ENCODE measurements at regions of chr13 and their contacts with region 1.

Region 1: GRCh38 chr13:110907951-110908898 is 6.6 kb downstream of the ANKRD10 start:
- DNase-seq: no peak
- ATAC-seq: peak in 1 of 2 donors; percentile 31

Region 2: DNA sequence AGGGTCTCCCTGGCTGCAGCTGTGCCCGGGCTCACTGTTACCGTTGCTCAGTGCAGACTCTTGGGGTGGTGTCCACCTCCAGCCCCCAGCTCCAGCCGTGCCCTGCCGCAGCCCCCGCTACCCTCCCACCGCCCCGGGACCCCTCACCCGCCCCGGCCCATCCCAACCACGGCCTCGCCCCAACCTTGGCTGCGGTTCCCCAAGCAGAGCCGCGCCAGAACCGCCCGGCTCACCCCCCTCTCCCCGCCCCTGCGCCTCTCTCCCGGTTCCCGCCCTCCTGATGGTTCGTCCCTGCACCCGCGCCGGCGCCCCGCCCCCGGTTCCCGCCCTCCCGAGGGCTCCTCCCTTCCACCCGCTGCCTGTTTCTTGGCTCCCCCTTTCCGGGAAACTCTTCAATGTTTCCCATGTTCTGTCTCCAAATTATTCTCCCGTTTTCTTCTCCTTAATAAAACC is 33.7 kb before region 1 on chr13:
- intact Hi-C with region 1: loop called in 1 of 2 experiments (anchors 5 kb)
- DNase-seq: peak; percentile 90
- ATAC-seq: peak; percentile 81 to 89

Region 3: GRCh38 chr13:111165241-111166010 is 257.2 kb after region 1 on chr13:
- intact Hi-C with region 1: no loop called
- DNase-seq: no peak
- ATAC-seq: peak in 1 of 2 donors; percentile 55

Region 4: DNA sequence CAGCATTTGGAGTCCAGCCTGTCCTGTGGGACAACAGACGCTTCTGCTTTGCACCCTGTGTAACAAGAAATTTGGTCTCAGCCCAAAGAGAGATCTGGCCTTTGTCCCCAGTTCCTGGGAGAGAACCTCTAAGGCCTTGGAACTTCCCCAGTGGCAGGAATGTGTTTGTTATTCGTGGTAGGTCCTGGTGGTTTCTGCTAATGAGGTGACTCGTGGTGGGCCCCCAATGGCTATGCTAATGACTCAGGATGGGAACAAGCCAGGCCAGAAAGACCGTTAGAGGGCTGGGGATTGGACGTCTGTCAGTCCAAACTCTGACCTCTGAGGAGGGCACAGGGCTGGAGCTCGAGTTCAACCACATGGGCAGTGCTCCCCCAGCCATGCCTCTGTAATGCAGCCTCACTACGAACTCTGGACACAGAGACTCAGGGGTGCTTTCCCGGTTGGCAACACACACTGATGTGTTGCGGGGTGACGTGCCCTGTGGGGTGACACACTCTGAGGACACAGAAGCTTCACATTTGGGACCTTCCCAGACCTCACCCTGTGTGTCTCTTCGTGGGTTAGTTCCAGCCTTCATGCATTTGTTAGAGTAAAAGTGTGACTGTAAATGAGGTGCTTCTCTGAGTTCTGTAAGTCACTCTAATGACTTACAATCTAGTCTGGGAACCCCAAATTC is 451.2 kb after region 1 on chr13:
- intact Hi-C with region 1: no loop called
- DNase-seq: no peak
- ATAC-seq: no peak

Measured in left cardiac atrium (tissue), 4 donors.